Activated CD4-positive, alpha-beta memory T cell treated with anti-CD3 and anti-CD28 coated beads for 36 hours (primary cell): ENCODE measurements at regions of chr2 and their contacts with region 1.

Region 1: DNA sequence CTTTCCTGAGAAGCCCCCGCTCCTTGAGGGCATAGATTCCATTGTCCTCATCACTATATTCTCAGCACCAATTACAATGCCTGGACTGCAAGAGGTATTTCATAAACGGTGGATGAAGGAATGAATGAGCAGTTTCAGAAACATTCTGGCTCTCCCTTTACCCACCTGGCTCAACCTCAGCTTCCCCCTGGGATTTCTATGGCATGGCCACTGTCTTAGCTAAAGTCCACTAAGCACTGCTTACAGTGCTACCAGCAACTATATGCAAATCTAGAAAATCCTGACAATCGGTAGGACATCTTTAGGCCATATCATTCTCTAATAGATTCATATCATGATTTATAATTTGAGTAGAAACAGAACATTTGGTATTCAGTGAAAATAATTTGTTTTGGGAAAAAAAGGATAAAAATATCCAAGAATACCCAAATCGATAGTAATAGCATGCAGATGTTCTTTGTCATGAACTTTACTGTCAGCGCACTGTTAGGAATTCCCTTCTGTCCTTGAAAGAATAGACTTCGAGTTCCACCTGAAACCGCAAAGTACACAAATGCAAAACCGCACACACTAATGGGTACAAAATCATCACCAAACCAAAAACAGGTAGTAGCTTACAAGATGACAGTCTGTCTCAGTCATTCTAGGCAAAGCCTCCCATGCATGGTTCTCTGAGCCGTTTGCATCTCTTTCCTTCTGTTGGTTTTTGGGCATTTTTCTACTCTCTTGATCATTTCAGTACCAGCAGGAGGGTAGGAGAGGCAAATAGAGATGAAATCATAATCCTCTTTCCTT is 303.6 kb upstream of the ID2 start:
- DNase-seq: peak; percentile 49
- H3K4me3 Mint-ChIP-seq: no peak overlapping the region
- H3K27ac Mint-ChIP-seq: peak overlapping the region; percentile 56
- H3K4me1 Mint-ChIP-seq: peaks cover 38% of the 10 kb centered on the region
- H3K27me3 Mint-ChIP-seq: no peaks in the 10 kb centered on the region

Region 2: GRCh38 chr2:8289111-8289510 is 89.1 kb before region 1 on chr2:
- CTCF ChIA-PET with region 1: no interaction called
- POLR2A ChIA-PET with region 1: no interaction called
- intact Hi-C with region 1: no loop called
- DNase-seq: no peak
- H3K4me3 Mint-ChIP-seq: no peak overlapping the region
- H3K27ac Mint-ChIP-seq: no peak overlapping the region
- H3K4me1 Mint-ChIP-seq: peaks cover 8% of the 10 kb centered on the region
- H3K27me3 Mint-ChIP-seq: peaks cover 4% of the 10 kb centered on the region

Region 3: DNA sequence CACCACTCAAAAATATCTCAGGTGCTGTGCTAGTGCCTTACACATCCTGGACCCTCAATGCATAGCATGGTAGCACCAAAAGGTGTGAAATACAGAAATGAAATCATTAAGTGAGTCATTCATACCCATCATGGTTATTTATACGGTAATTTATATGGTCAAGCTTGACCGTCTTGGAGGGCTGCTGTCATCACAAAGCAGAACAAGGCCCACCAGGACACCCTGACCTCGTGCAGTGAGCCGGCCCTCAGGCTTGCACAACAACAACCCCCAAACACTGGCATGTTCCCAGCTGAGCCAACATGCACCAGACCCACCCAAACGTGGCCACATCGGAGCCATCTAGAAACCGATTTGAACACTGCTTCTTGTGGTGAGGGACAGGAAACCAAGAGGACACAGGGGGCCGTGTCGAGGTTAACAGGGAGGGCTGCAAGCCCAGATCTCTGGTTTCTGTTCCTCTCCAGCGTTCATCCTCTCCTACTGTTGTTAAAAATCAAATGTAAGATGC is 74.8 kb before region 1 on chr2:
- CTCF ChIA-PET with region 1: interaction called, 3 read pairs
- POLR2A ChIA-PET with region 1: no interaction called
- intact Hi-C with region 1: loop called (anchors 2 kb)
- DNase-seq: peak; percentile 81
- H3K4me3 Mint-ChIP-seq: no peak overlapping the region
- H3K27ac Mint-ChIP-seq: peak overlapping the region; percentile 16
- H3K4me1 Mint-ChIP-seq: peaks cover 62% of the 10 kb centered on the region
- H3K27me3 Mint-ChIP-seq: peaks cover 6% of the 10 kb centered on the region

Region 4: GRCh38 chr2:8364668-8365067 is 13.5 kb before region 1 on chr2:
- CTCF ChIA-PET with region 1: no interaction called
- POLR2A ChIA-PET with region 1: no interaction called
- intact Hi-C with region 1: no loop called
- DNase-seq: no peak
- H3K4me3 Mint-ChIP-seq: no peak overlapping the region
- H3K27ac Mint-ChIP-seq: no peak overlapping the region
- H3K4me1 Mint-ChIP-seq: no peaks in the 10 kb centered on the region
- H3K27me3 Mint-ChIP-seq: no peaks in the 10 kb centered on the region

Region 5: GRCh38 chr2:8421658-8422449 is 43.6 kb after region 1 on chr2:
- CTCF ChIA-PET with region 1: no interaction called
- POLR2A ChIA-PET with region 1: no interaction called
- intact Hi-C with region 1: no loop called
- DNase-seq: no peak
- H3K4me3 Mint-ChIP-seq: no peak overlapping the region
- H3K27ac Mint-ChIP-seq: no peak overlapping the region
- H3K4me1 Mint-ChIP-seq: peaks cover 11% of the 10 kb centered on the region
- H3K27me3 Mint-ChIP-seq: no peaks in the 10 kb centered on the region

Region 6: DNA sequence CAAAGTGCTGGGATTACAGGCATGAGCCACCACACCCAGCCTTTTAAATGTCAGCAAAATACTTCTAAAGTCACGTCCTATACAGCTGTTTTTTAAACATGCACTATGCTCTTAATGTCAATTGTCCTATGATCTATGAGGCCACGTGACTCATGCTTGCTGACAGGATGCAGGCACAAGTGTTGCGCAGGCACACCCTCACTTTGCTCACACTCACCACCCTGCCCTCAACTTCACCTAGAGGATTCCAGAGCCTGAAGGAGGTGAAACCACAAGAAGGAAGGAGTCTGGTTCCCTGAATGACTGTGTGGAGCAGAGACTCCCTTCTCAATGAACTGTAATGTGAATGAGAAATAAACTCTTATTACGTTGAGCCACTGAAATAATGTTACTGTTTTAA is 528.0 kb after region 1 on chr2:
- CTCF ChIA-PET with region 1: no interaction called
- POLR2A ChIA-PET with region 1: no interaction called
- intact Hi-C with region 1: no loop called
- DNase-seq: no peak
- H3K4me3 Mint-ChIP-seq: no peak overlapping the region
- H3K27ac Mint-ChIP-seq: no peak overlapping the region
- H3K4me1 Mint-ChIP-seq: no peaks in the 10 kb centered on the region
- H3K27me3 Mint-ChIP-seq: no peaks in the 10 kb centered on the region